Heart right ventricle (tissue), 16 donors: ENCODE measurements at regions of chr2 and their contacts with region 1.

Region 1: DNA sequence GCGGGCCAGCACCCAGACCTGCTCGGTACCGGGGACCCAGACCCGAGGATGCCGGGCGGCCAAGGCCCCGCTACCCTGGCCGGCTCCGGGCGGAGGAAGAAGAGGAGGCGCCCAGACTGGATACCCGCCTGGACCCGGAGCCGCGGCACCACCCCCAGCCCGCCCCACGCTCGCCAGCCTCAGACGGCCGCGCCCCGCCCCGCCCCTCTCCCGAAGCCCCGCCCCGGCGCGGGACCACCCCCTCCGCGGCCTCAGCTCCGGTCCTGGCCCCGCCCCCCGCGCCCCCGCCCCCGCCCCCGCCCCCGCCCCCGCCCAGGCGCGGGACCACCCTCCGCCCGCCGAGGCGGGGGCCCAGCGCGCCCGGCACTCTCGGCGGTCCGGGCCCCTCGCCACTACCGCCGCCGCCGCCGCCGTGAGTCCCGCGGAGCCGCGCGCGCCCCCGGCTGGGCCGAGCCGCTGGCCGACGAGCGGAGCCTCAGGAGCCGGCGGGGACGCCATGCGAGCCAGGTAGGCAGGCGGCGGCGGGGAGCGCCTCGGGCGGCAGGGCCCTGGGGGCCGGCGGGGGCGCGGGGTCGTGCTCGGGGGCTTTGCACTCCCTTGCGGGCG is at the start of gene SH3BP4:
- DNase-seq: peak; percentile 83 to 88
- ATAC-seq: peak; percentile 79 to 92 (median 88)
- H3K4me3 ChIP-seq: peak within 1 kb of the TSS; percentile 64 to 95 (median 85)
- H3K27ac ChIP-seq: peak within 1 kb of the TSS; percentile 69 to 92 (median 84)
- H3K4me1 ChIP-seq: peaks cover 3 to 45% (median 38%) of the 10 kb centered on the region in 9 donors
- H3K27me3 ChIP-seq: peaks cover 0 to 42% (median 0%) of the 10 kb centered on the region in 7 donors
- CTCF ChIP-seq: no peak
- total RNA-seq, gene SH3BP4: 6.3 to 14.2 (median 10.8) TPM

Region 2: DNA sequence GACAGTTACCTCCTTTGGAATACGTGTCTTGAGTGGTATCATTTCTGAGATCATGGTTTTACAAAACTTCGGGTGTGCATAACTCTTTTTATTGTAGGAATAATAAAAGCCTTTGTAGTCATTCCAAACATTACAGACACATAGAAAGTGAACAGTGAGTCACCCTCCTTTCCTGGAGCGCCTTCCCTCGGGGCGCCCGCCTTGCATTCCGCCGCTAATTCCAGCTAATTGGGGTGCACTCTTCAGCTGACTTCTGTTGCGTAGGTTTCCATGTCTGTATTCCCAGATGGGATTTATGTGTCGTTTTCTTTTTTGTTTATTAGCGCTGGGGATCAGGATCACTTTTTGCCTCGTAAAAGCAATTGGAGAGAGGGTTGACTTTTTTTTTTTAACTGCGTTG is 18.7 kb after region 1 on chr2:
- intact Hi-C with region 1: no loop called
- DNase-seq: no peak
- ATAC-seq: peak in 3 of 8 donors; percentile 52 to 73 (median 69)
- H3K4me3 ChIP-seq: no peak overlapping the region
- H3K27ac ChIP-seq: peak overlapping the region in 1 of 10 donors; percentile 15
- H3K4me1 ChIP-seq: peaks cover 0 to 52% (median 19%) of the 10 kb centered on the region in 9 donors
- H3K27me3 ChIP-seq: no peaks in the 10 kb centered on the region
- CTCF ChIP-seq: no peak

Region 3: GRCh38 chr2:234981197-234982117 is 29.7 kb after region 1 on chr2:
- intact Hi-C with region 1: loop called in 4 of 10 experiments (anchors 1 to 2 kb)
- DNase-seq: peak; percentile 64 to 77
- ATAC-seq: peak; percentile 74 to 95 (median 90)
- H3K4me3 ChIP-seq: peak overlapping the region in 8 of 10 donors; percentile 12 to 44 (median 30)
- H3K27ac ChIP-seq: peak overlapping the region in 9 of 10 donors; percentile 61 to 87 (median 81)
- H3K4me1 ChIP-seq: peaks cover 19 to 97% (median 60%) of the 10 kb centered on the region in 9 donors
- H3K27me3 ChIP-seq: no peaks in the 10 kb centered on the region
- CTCF ChIP-seq: peak in 3 of 9 donors; percentile 25 to 31 (median 26)

Region 4: DNA sequence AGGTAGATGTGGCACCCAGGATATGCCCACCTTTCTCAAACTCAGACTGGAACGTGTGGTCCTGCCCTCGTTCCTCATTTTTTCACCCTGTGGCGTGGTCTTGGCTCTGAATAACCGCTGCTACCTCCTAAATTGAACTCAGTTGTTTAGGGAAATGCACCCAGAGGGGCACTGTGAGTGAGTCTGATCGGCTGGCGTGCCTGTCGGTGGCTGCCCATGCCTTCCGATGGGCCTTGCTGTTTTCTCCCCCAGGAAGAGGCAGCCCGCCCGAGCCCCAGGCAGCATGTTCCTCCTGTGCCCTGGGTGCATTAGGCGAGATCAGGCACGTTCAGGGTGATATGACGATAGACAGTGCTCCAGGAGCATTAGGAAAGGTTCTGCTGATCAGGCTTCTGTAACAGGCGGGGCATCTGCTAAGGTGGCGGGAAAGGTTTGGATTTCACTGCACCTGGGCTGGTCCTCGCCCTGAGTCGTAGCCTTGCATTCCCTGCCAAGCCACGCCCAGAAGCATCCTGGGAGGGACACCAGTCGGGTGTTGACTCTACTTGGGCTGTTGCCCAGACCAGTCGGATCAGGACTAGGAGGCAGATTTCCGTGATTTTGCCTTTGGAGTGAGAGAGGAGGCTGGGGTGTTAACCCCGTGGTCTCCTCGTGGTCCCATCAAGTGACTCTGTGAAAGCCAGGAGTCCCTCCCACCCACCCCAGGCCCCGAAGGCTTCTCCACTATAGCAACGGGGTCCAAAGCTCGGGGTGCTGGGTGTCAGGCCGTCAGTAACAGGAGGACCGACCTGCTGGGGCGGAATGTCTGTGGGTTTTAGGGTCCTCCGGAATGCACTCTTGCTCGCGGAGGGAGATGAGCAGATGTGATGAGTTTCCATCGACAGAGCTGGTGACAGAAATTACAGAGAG is 75.1 kb after region 1 on chr2:
- intact Hi-C with region 1: loop called in 1 of 10 experiments (anchors 10 kb)
- DNase-seq: peak; percentile 60 to 64
- ATAC-seq: peak; percentile 47 to 84 (median 65)
- H3K4me3 ChIP-seq: no peak overlapping the region
- H3K27ac ChIP-seq: no peak overlapping the region
- H3K4me1 ChIP-seq: peaks cover 4 to 53% (median 30%) of the 10 kb centered on the region in 9 donors
- H3K27me3 ChIP-seq: no peaks in the 10 kb centered on the region
- CTCF ChIP-seq: no peak

Region 5: DNA sequence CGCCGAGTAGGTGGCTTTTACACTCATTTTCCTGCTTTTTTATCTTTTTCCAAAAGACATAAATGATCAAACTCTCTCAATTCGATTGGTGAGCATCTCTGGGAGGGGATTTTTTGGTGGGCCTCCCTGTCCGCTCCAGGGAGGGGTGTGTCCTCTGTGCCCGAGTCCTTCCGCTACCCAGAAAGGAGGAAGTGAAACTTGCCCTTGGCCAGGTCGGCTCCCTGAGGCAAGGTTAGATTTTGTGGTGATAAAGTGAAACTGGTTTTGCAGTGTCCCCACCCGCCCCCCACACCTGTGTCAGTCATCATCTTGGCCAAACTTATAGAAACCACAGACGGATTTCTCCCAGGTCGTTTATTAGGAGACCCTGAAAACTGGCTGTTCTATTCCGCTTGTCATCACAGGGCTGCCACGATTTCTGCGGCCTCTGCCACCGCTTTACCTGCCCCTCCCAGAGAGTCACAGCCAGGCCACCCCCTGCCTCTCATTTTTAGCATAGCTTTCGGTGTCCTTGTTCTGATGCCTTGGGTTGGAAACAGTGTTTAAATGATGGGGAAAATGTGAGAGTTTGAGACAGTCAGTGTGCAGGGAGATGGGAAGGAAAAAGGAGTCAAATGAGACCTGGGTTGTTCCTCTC is 93.7 kb after region 1 on chr2:
- intact Hi-C with region 1: loop called in 5 of 10 experiments (anchors 5 to 10 kb)
- DNase-seq: no peak
- ATAC-seq: no peak
- H3K4me3 ChIP-seq: no peak overlapping the region
- H3K27ac ChIP-seq: no peak overlapping the region
- H3K4me1 ChIP-seq: peaks cover under 1 to 48% (median 22%) of the 10 kb centered on the region in 9 donors
- H3K27me3 ChIP-seq: no peaks in the 10 kb centered on the region
- CTCF ChIP-seq: no peak

Region 6: GRCh38 chr2:235050992-235051351 is 99.2 kb after region 1 on chr2:
- intact Hi-C with region 1: loop called in 5 of 10 experiments (anchors 5 to 10 kb)
- DNase-seq: peak; percentile 91 to 94
- ATAC-seq: peak; percentile 87 to 96 (median 92)
- H3K4me3 ChIP-seq: peak overlapping the region in 1 of 10 donors; percentile 26
- H3K27ac ChIP-seq: peak overlapping the region; percentile 44 to 88 (median 71)
- H3K4me1 ChIP-seq: peaks cover 13 to 50% (median 43%) of the 10 kb centered on the region in 9 donors
- H3K27me3 ChIP-seq: no peaks in the 10 kb centered on the region
- CTCF ChIP-seq: peak in 5 of 9 donors; percentile 10 to 47 (median 37)

Region 7: DNA sequence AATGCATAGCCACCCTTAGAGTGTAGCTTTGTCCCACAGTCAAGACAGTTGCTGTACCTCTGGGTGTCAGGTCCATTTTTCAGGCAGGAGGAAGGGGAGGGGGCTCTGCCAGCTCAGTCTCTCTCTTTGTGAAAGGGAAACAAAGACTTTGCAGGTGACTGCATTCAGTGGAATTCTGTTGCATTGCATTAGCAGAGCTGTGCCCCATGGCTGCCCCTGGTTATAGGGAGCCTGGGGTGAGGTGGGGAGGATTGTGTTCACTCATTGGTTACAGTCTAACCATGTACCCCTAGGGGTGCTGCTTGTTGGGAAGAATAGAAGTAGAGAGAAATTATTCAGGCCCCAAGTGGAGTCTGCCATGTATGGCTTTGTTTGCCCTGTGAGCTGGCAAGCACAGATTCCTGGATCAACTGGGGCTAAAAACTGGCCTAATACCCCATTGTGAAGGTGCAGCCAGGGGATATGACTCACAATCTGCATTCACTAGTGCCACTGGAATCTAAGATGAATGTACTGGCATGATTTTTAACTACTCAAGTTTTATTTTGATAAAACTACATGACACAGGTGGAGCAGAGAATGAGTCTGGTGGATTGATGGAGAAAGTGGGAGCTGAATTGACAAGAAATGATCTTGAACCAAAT is 118.4 kb after region 1 on chr2:
- intact Hi-C with region 1: no loop called
- DNase-seq: no peak
- ATAC-seq: no peak
- H3K4me3 ChIP-seq: no peak overlapping the region
- H3K27ac ChIP-seq: no peak overlapping the region
- H3K4me1 ChIP-seq: peaks cover 0 to 18% (median 6%) of the 10 kb centered on the region in 9 donors
- H3K27me3 ChIP-seq: no peaks in the 10 kb centered on the region
- CTCF ChIP-seq: no peak